Left ventricle myocardium inferior (tissue), 1 donor: ENCODE measurements at regions of chr17 and their contacts with region 1.

Region 1: DNA sequence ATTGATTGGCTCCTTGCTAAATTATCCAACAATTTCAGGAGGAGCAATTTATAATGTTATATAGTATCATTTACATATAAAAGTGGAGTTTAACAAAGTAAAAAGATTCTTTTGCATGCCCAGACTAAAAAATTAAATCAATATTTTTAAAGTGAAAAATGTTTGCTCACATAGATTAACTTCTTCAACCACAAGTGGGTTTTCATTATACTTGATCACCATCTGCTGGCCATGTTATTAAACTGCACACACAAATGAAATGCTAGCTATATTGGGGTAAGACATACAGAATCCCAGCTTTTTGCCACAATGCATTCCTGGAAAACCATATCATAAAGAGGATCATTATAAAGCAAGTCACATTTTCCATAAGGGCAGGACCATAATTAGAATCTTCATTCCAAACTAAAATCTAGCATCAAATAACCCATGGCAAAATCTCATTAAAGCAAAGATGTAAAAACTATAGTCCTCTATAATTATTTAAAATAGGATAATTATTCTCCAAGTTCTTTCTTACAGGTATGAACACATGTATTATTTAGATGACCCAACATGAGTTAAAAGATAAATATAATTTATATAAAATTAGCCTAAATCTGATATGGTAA is 26.3 kb downstream of the CEP112 start:
- DNase-seq: no peak
- H3K4me3 ChIP-seq: no peak overlapping the region
- H3K27ac ChIP-seq: no peak overlapping the region
- H3K4me1 ChIP-seq: peaks cover 7% of the 10 kb centered on the region
- H3K27me3 ChIP-seq: no peaks in the 10 kb centered on the region
- CTCF ChIP-seq: peak; percentile 79

Region 2: GRCh38 chr17:65243802-65244220 is 921.8 kb before region 1 on chr17:
- intact Hi-C with region 1: loop called (anchors 10 kb)
- DNase-seq: no peak
- H3K4me3 ChIP-seq: no peak overlapping the region
- H3K27ac ChIP-seq: no peak overlapping the region
- H3K4me1 ChIP-seq: no peaks in the 10 kb centered on the region
- H3K27me3 ChIP-seq: peaks cover 20% of the 10 kb centered on the region
- CTCF ChIP-seq: no peak

Region 3: GRCh38 chr17:65294179-65294720 is 871.4 kb before region 1 on chr17:
- intact Hi-C with region 1: loop called (anchors 10 kb)
- DNase-seq: peak; percentile 38
- H3K4me3 ChIP-seq: no peak overlapping the region
- H3K27ac ChIP-seq: no peak overlapping the region
- H3K4me1 ChIP-seq: no peaks in the 10 kb centered on the region
- H3K27me3 ChIP-seq: peaks cover 12% of the 10 kb centered on the region
- CTCF ChIP-seq: peak; percentile 81

Region 4: GRCh38 chr17:66222798-66223350 is 57.3 kb after region 1 on chr17:
- intact Hi-C with region 1: no loop called
- DNase-seq: no peak
- H3K4me3 ChIP-seq: no peak overlapping the region
- H3K27ac ChIP-seq: no peak overlapping the region
- H3K4me1 ChIP-seq: no peaks in the 10 kb centered on the region
- H3K27me3 ChIP-seq: peaks cover 48% of the 10 kb centered on the region
- CTCF ChIP-seq: no peak